HepG2 (cell line): ENCODE measurements at regions of chr7 and their contacts with region 1.

Region 1: DNA sequence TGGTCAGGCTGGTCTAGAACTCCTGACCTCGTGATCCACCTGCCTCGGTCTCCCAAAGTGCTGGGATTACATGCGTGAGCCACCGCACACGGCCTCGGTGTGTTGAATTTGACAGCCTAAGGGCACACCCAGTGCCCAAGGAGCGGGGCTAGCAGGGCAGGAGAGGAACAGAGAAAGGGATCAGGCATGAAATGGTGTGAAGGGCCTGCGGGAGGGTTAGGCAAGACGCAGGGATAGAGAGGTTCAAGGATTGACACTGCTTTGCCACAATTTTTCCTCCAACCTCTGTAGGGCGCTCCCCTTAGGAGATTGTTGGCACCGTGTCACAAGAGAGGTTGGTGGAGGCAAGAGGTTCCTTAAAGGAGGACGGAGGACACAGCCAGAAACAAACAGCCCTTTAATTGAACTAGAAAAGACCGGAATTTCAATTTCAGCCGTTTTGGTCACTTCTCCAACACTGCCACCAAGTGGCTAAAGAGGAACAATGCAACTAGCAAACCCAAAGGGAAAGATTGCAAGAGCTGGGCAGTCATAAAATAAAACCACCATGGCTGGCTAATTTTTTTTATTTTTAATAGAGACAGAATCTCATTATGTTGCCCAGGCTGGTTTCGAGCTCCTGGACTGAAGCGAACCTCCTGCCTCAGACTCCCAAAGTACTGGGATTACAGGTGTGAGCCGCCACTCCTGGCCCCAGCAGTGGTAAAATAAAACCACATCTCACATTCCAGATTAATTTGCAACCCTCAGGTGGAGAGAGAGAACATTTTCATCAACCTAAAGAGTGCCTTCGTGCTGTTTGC is 6.9 kb upstream of the CREB3L2 start:
- DNase-seq: peak; percentile 62
- ATAC-seq: peak; percentile 64
- H3K4me3 ChIP-seq: peak overlapping the region in 1 of 3 experiments; percentile 41; a peak in 2 of 6 replicates
- H3K27ac ChIP-seq: no peak overlapping the region
- H3K4me1 ChIP-seq: peaks cover 23% of the 10 kb centered on the region
- H3K27me3 ChIP-seq: no peaks in the 10 kb centered on the region
- CTCF ChIP-seq: peak; percentile 80
- EP300 ChIP-seq: no peak
- POLR2A ChIP-seq: no peak
- RAD21 ChIP-seq: peak; percentile 84

Region 2: GRCh38 chr7:137371616-137372015 is 637.1 kb before region 1 on chr7:
- CTCF ChIA-PET with region 1: no interaction called
- POLR2A ChIA-PET with region 1: no interaction called
- in situ Hi-C with region 1: no loop called
- intact Hi-C with region 1: no loop called
- DNase-seq: no peak
- ATAC-seq: no peak
- H3K4me3 ChIP-seq: no peak overlapping the region
- H3K27ac ChIP-seq: no peak overlapping the region
- H3K4me1 ChIP-seq: no peaks in the 10 kb centered on the region
- H3K27me3 ChIP-seq: no peaks in the 10 kb centered on the region
- CTCF ChIP-seq: no peak
- EP300 ChIP-seq: no peak
- POLR2A ChIP-seq: no peak
- RAD21 ChIP-seq: no peak

Region 3: GRCh38 chr7:137606061-137606674 is 402.6 kb before region 1 on chr7:
- CTCF ChIA-PET with region 1: no interaction called
- POLR2A ChIA-PET with region 1: no interaction called
- in situ Hi-C with region 1: no loop called
- intact Hi-C with region 1: loop called (anchors 5 kb)
- DNase-seq: peak; percentile 38
- ATAC-seq: no peak; the same call in 2 of the 3 replicates
- H3K4me3 ChIP-seq: no peak overlapping the region
- H3K27ac ChIP-seq: no peak overlapping the region
- H3K4me1 ChIP-seq: no peaks in the 10 kb centered on the region
- H3K27me3 ChIP-seq: peaks cover 1 to 8% of the 10 kb centered on the region in 2 experiments; a peak in 3 of 5 replicates
- CTCF ChIP-seq: no peak
- EP300 ChIP-seq: no peak
- POLR2A ChIP-seq: no peak
- RAD21 ChIP-seq: no peak

Region 4: DNA sequence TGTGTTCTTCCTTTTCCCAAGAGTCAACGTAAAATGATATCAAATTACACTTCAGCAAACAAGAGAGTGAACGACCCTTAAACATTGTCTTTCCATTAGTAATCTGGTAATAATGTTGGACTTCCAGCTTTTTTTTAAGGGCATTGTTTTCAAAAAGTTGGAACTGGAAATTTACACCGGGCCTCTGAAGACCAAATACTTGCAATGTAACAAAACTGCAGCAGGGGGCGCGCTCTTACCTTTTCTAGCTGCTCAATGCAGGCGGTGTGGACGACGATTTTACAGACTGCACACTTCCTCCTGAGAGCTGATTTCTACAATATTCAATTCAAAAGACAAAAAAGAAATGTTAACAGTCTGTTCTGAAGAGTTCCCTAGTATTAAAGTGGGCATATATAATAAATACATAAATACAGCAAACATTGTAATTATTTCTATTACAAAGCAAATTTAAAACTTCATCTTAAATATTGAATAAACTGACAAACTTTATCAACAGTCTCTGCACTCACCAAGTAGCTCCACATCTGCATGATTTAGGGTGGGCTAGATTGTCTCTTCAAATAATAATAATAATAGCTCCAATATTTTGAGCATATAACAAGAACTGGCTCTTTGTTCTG is 352.4 kb before region 1 on chr7:
- CTCF ChIA-PET with region 1: interaction called, 3 read pairs
- POLR2A ChIA-PET with region 1: no interaction called
- in situ Hi-C with region 1: loop called (anchors 5 kb)
- intact Hi-C with region 1: loop called (anchors 1 kb)
- DNase-seq: peak; percentile 59
- ATAC-seq: peak; percentile 86
- H3K4me3 ChIP-seq: no peak overlapping the region
- H3K27ac ChIP-seq: no peak overlapping the region
- H3K4me1 ChIP-seq: no peaks in the 10 kb centered on the region
- H3K27me3 ChIP-seq: peaks cover 5 to 18% of the 10 kb centered on the region in 2 experiments; a peak in 3 of 5 replicates
- CTCF ChIP-seq: peak; percentile 80
- EP300 ChIP-seq: no peak
- POLR2A ChIP-seq: no peak
- RAD21 ChIP-seq: peak; percentile 51; the same call in 1 of the 2 replicates

Region 5: GRCh38 chr7:137909037-137909436 is 99.7 kb before region 1 on chr7:
- CTCF ChIA-PET with region 1: interaction called, 46 read pairs
- POLR2A ChIA-PET with region 1: no interaction called
- in situ Hi-C with region 1: loop called (anchors 5 kb)
- intact Hi-C with region 1: no loop called
- DNase-seq: no peak
- ATAC-seq: peak; percentile 14; the same call in 2 of the 3 replicates
- H3K4me3 ChIP-seq: no peak overlapping the region
- H3K27ac ChIP-seq: no peak overlapping the region
- H3K4me1 ChIP-seq: peaks cover 3% of the 10 kb centered on the region; the same call in 1 of the 2 replicates
- H3K27me3 ChIP-seq: no peaks in the 10 kb centered on the region
- CTCF ChIP-seq: no peak
- EP300 ChIP-seq: no peak
- POLR2A ChIP-seq: no peak
- RAD21 ChIP-seq: no peak